ENCODE measurements at regions of chr5 and their contacts with region 1.

Region 1: GRCh38 chr5:134648425-134649162 is at the start of gene SEC24A:
- DNase-seq: peak; percentile 75 to 96
- H3K4me3 ChIP-seq: peak within 1 kb of the TSS; percentile 79 to 86
- H3K27ac ChIP-seq: peak within 1 kb of the TSS; percentile 97 to 98
- H3K4me1 ChIP-seq: peaks cover 4 to 15% of the 10 kb centered on the region in 2 donors
- H3K27me3 ChIP-seq: no peaks in the 10 kb centered on the region
- CTCF ChIP-seq: no peak
- total RNA-seq, gene SEC24A: 21.2 TPM

Region 2: DNA sequence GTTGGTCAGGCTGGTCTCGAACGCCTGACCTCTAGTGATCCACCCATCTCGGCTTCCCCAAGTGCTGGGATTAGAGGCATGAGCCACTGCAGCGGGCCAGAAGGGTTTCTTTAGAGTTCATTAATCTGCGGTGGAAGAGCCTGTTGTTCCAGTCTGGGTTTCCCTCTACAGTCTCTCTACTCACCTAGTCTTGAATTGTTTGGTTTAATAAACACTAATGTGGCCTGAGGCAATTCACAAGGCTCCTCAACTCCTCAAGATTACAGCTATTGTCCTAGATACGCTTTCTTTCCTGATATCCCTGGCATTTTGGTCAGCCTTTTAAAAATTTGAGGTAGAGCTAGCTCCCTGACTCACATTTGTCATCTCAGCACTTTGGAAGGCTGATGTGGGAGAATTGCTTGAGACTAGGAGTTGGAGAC is 11.4 kb before region 1 on chr5:
- intact Hi-C with region 1: loop called (anchors 1 kb)
- DNase-seq: no peak
- H3K4me3 ChIP-seq: no peak overlapping the region
- H3K27ac ChIP-seq: no peak overlapping the region
- H3K4me1 ChIP-seq: peaks cover 0 to 4% of the 10 kb centered on the region in 2 donors
- H3K27me3 ChIP-seq: no peaks in the 10 kb centered on the region
- CTCF ChIP-seq: no peak